ENCODE measurements at regions of chr18 and their contacts with region 1.

Region 1: DNA sequence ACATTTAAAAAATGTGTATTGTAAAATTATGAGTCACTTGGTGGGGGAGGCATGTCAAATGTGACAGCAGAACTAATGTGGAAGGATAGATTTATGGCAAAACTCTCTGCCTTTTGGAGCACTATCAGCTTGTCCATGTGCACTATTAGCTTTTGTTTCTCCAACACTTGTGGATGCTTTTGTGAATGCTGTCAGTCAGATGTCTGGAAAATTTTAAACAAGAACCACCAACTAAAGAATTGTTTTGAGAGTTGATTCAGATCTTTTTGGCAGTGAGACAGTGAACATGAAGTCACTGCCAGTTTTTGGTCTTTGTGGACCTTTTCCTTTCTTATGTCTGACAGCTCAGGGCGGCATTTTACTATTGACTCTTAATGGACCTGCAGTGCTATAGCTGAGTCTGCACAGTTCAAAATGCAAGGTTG is 72.4 kb downstream of the KIAA1328 start:
- DNase-seq: no peak
- H3K4me3 ChIP-seq: no peak overlapping the region
- H3K27ac ChIP-seq: no peak overlapping the region
- H3K4me1 ChIP-seq: 0 out of 2 replicates have a peak, but pooled peaks cover 4% of the 10 kb centered on the region
- H3K27me3 ChIP-seq: no peaks in the 10 kb centered on the region
- CTCF ChIP-seq: no peak

Region 2: DNA sequence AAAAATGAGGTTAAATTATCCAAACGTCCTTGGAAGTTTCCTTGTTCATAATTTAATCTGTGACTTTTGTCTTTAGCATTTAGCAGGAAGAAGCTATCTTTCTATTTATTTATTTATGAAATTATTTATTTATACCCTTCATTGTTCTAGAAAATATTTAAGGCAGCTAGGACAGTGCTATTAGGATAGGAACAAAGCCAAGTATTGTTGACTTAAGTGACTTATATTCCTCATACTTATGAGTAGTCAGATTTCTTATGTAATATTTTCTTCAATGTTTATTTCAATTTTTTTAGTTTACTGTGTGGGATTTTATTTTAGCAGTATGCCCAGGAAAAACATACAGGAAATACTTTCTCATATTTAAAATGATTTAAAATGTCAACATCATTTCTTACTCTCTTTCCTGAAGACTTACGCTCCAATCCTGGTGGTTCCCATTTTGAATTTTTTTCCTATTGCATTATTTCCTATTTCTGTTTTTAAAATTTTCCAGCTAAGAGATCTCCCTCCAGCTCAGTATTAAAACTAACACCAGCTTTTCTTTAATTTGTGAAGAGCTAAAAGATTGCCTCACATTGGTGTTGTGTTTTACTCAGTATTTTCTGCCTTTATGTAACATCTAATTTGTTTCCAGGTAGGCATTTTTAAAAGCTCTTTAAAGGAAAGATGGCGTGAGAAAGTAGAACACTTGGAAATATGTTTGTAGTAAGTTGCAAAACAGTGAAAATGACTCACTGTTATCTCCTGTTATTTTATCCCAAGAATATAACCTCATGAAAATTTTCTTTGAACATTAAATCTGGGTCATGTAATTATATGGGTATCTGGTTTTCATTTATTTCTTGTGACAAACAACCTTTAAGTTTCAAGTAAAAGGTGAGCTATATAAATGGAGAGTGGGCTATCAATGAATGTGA is 1827.8 kb before region 1 on chr18:
- CTCF ChIA-PET with region 1: no interaction called
- POLR2A ChIA-PET with region 1: interaction called, 19 read pairs
- intact Hi-C with region 1: no loop called
- DNase-seq: no peak
- H3K4me3 ChIP-seq: no peak overlapping the region
- H3K27ac ChIP-seq: no peak overlapping the region
- H3K4me1 ChIP-seq: no peaks in the 10 kb centered on the region
- H3K27me3 ChIP-seq: no peaks in the 10 kb centered on the region
- CTCF ChIP-seq: no peak

Region 3: GRCh38 chr18:36534154-36534688 is 367.1 kb before region 1 on chr18:
- CTCF ChIA-PET with region 1: no interaction called
- POLR2A ChIA-PET with region 1: no interaction called
- intact Hi-C with region 1: no loop called
- DNase-seq: no peak
- H3K4me3 ChIP-seq: no peak overlapping the region
- H3K27ac ChIP-seq: no peak overlapping the region
- H3K4me1 ChIP-seq: 0 out of 2 replicates have a peak, but pooled peaks cover 5% of the 10 kb centered on the region
- H3K27me3 ChIP-seq: no peaks in the 10 kb centered on the region
- CTCF ChIP-seq: no peak

Region 4: GRCh38 chr18:36917907-36918306 is 16.6 kb after region 1 on chr18:
- CTCF ChIA-PET with region 1: no interaction called
- POLR2A ChIA-PET with region 1: interaction called, 11 read pairs
- intact Hi-C with region 1: no loop called
- DNase-seq: no peak
- H3K4me3 ChIP-seq: no peak overlapping the region
- H3K27ac ChIP-seq: no peak overlapping the region
- H3K4me1 ChIP-seq: no peaks in the 10 kb centered on the region
- H3K27me3 ChIP-seq: no peaks in the 10 kb centered on the region
- CTCF ChIP-seq: no peak

Region 5: GRCh38 chr18:37042381-37042780 is 141.1 kb after region 1 on chr18:
- CTCF ChIA-PET with region 1: no interaction called
- POLR2A ChIA-PET with region 1: no interaction called
- intact Hi-C with region 1: no loop called
- DNase-seq: no peak
- H3K4me3 ChIP-seq: no peak overlapping the region
- H3K27ac ChIP-seq: no peak overlapping the region
- H3K4me1 ChIP-seq: no peaks in the 10 kb centered on the region
- H3K27me3 ChIP-seq: no peaks in the 10 kb centered on the region
- CTCF ChIP-seq: no peak

Measured in PC-9 (cell line).